Activated T-helper 1 cell treated with anti-CD3 and anti-CD28 coated beads, Interleukin-12 subunit alpha, Interleukin-12 subunit beta, Interleukin-2, Interleukin-4 antibody, amounts not matched to agents 30 ng/mL and 10 ng/mL and 1 ng/mL, durations not matched to agents 14 hours and 24 hours and 36 hours (primary cell): ENCODE measurements at regions of chr9 and their contacts with region 1.

Region 1: DNA sequence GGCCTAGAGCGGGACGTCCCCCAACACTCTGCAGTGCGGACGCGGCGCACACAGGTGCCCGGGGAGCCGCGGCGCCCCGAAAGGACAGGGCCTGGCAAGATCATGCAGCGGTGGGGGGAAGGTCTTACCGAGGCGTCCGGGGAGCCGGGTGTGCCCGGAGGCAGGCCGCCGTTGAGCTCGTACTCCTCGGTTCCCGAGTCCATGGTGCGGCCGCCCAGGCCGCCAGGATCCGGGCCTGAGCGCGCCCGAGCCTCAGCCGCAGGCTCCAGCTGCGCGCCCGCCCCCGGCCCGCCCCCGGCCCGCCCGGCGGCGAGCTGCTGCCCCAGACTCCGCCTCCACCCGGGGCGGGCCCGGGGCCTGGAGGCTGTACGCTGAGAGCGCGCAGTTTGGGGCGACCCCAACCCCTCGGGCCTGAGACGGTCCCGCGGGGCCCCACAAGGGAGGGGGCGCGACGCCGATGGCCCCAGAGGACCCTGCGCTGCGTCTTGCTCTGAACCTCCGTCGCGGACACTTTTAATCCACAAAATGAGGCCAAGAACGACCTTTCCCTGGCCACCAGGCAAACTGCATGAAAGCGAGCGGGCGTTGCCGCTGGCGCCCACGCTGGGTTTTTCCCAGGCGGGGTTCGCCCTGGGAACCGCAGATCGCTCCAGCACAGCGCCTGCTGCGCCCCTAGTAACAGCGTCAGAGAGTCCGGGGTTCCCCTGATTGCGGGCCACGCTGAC is at the start of gene NINJ1:
- DNase-seq: peak; percentile 89
- H3K4me3 Mint-ChIP-seq: peak within 1 kb of the TSS; percentile 94
- H3K27ac Mint-ChIP-seq: peak within 1 kb of the TSS; percentile 96
- H3K4me1 Mint-ChIP-seq: peaks cover 57% of the 10 kb centered on the region
- H3K27me3 Mint-ChIP-seq: peaks cover 2% of the 10 kb centered on the region
- total RNA-seq, gene NINJ1: 94.2 and 95.3 TPM in 2 replicates

Region 2: GRCh38 chr9:93183609-93184431 is 49.6 kb after region 1 on chr9 and contains the start of gene WNK2:
- intact Hi-C with region 1: loop called (anchors 2 kb)
- DNase-seq: peak; percentile 36
- H3K4me3 Mint-ChIP-seq: peak within 1 kb of the TSS; percentile 75
- H3K27ac Mint-ChIP-seq: no peak within 1 kb of the TSS
- H3K4me1 Mint-ChIP-seq: no peaks in the 10 kb centered on the region
- H3K27me3 Mint-ChIP-seq: peaks cover 61% of the 10 kb centered on the region
- total RNA-seq, gene WNK2: 2.2 and 3.0 TPM in 2 replicates

Region 3: GRCh38 chr9:93207326-93207814 is 73.2 kb after region 1 on chr9:
- intact Hi-C with region 1: no loop called
- DNase-seq: no peak
- H3K4me3 Mint-ChIP-seq: no peak overlapping the region
- H3K27ac Mint-ChIP-seq: no peak overlapping the region
- H3K4me1 Mint-ChIP-seq: peaks cover 5% of the 10 kb centered on the region
- H3K27me3 Mint-ChIP-seq: no peaks in the 10 kb centered on the region

Region 4: DNA sequence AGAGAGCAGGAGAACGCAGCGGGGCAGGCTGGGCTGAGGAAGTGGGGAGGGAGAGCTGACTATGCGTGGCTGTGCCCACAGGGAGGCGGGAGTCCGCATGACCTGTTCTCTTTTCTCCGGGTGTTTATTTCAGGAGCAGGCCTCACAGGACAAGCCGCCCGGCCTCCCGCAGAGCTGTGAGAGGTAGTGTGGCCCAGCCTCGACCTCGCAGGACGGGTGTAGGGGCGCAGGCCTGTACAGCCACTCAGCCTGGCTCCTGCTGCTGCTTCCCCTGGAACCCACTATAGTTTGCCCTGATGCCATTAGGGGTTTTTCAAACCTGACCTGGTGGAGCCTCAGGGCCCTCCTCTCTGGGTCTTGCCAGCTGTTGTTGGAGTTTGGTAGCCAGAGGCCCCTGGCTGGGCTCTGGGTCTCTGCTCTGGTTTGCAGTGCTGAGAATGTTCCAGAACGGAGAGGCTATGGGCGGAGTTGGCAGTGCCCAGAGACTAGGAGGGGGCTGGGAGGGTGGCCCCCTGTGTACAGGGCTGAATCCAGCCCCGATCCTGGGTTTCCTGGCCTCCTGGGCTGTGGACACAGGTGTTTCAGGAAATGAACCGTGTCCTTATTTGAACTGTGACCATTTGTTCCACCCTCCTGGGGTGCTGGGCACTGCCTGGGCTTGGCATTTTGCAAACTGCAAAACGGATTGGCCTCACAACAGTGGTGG is 128.5 kb after region 1 on chr9:
- intact Hi-C with region 1: no loop called
- DNase-seq: no peak
- H3K4me3 Mint-ChIP-seq: no peak overlapping the region
- H3K27ac Mint-ChIP-seq: no peak overlapping the region
- H3K4me1 Mint-ChIP-seq: no peaks in the 10 kb centered on the region
- H3K27me3 Mint-ChIP-seq: peaks cover 2% of the 10 kb centered on the region